AG04450 (cell line): ENCODE measurements at regions of chr14 and their contacts with region 1.

Region 1: DNA sequence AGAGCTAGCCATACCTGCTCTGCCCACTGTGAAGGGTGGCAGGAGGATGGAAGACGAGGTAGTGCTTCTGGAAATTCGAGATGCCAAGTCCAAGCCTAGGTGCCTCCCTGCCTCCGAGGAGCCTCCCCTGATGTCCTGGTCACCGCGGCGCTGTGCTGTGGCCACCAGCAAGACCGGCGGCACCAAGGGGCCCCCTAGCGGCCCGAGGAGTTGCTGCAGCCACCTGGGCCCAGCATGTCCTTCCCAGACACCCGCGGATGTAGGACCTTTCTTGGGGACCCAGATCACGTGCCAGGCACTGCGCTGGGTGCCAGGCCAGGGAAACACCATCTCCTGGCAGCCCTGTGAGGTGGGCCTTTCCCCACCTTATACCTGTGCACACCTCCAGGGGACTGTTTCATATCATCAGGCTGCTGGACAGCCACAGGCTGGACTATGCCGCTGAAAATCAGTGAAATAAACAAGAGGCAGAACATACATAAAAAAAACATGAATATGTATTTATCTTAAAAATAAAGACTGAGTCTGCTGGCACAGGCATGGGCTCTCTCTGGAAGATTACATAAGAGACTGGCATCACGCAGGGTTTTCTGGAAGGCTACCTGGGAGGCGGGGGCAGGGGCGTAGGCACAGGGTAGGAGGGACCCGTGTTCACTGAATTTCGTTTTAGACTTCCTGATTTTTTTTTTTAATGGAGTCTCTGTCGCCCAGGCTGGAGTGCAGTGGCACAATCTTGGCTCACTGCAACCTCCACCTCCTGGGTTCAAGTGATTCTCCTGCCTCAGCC is 15.9 kb upstream of the HHIPL1 start:
- DNase-seq: peak; percentile 18
- H3K4me3 ChIP-seq: no peak overlapping the region
- H3K27ac ChIP-seq: no peak overlapping the region
- H3K27me3 ChIP-seq: peaks cover 4% of the 10 kb centered on the region
- CTCF ChIP-seq: peak; percentile 96

Region 2: DNA sequence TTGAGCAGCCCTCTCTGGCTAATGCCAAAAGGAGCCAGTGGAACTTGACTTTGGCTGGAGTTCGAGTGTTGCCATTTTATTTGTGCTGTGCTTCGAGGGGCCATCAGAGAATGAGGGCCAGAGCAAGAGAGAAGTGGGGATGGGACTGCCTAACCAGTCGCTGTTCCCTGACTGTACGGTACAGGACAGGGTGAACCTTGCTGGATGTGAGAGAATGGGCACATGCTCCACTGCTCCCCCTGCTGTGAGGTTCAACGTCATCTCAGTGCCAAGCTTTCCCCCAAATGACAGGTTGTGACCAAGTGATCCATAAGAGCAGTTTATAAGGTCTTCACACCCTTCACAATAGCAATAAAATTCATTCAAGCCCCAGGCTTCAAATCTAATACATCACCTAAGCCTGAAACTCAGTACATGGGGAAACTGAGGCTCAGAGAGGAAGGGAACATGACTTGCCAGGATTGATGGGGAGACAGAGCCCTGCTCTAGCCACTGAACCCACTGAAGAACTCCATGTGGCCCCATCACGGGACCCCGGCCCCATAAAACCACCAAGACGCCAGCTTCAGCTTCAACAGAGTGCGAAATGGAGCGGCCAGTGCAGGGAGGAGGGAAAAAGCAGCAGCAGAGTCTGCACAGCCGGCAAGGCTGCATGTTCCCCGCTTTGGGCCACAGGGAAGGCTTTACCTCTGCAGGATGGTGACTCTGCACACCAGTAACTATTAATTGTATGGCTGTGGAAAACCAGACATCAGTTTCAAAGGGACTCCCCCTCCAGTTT is 301.8 kb before region 1 on chr14:
- CTCF ChIA-PET with region 1: no interaction called
- POLR2A ChIA-PET with region 1: no interaction called
- DNase-seq: no peak
- H3K4me3 ChIP-seq: no peak overlapping the region
- H3K27ac ChIP-seq: no peak overlapping the region
- H3K27me3 ChIP-seq: no peaks in the 10 kb centered on the region
- CTCF ChIP-seq: no peak

Region 3: GRCh38 chr14:99518441-99519346 is 110.3 kb before region 1 on chr14:
- CTCF ChIA-PET with region 1: interaction called, 27 read pairs
- POLR2A ChIA-PET with region 1: no interaction called
- DNase-seq: no peak
- H3K4me3 ChIP-seq: no peak overlapping the region
- H3K27ac ChIP-seq: no peak overlapping the region
- H3K27me3 ChIP-seq: no peaks in the 10 kb centered on the region
- CTCF ChIP-seq: peak; percentile 94

Region 4: GRCh38 chr14:99524804-99525698 is 104.0 kb before region 1 on chr14:
- CTCF ChIA-PET with region 1: interaction called, 27 read pairs
- POLR2A ChIA-PET with region 1: no interaction called
- DNase-seq: no peak
- H3K4me3 ChIP-seq: no peak overlapping the region
- H3K27ac ChIP-seq: peak overlapping the region; percentile 52
- H3K27me3 ChIP-seq: no peaks in the 10 kb centered on the region
- CTCF ChIP-seq: peak; percentile 48

Region 5: DNA sequence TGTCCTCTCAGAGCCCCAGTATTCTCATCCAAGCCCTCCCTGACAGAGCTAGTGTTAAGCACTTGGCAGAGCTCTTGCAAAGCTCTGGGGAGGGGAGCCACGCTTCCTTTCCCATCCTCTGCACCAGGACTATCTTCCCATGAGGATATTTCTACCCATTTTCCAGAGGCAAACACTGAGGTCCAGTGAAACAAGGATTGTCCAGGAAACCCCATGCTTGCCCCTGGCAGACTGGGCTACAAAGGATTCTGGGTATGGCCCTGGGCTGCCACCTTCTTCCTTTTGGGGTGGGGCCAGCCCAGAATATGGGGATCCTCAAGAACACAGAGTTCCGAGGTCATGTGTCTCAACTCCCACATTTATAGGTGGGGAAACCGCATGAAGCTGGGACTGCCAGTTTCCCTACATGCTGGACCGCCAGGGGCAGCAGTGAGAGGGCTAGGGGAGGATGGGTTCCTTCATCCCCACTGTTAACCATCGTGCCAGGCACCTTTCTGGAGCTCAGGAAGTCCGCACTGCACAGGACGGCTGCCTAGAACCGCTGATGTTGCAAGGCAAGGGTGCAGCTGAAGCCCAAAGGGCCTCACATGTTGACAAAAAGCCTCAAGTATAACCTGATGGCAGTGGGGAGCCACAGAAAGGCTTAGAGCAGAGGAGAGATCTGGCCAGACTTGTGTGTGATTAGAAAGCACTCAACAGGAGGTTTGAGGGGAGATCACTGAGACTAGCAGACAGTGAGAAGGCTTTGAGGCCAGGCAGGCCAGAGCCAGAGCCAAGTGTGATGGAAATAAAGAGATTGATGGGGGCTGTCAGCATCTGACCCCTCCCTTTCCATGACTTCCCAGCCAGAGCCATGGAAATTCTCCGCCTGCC is 19.5 kb before region 1 on chr14:
- CTCF ChIA-PET with region 1: interaction called, 16 read pairs
- POLR2A ChIA-PET with region 1: no interaction called
- DNase-seq: no peak
- H3K4me3 ChIP-seq: no peak overlapping the region
- H3K27ac ChIP-seq: no peak overlapping the region
- H3K27me3 ChIP-seq: no peaks in the 10 kb centered on the region
- CTCF ChIP-seq: peak; percentile 67